AG04449 (cell line): ENCODE measurements at regions of chr13 and their contacts with region 1.

Region 1: DNA sequence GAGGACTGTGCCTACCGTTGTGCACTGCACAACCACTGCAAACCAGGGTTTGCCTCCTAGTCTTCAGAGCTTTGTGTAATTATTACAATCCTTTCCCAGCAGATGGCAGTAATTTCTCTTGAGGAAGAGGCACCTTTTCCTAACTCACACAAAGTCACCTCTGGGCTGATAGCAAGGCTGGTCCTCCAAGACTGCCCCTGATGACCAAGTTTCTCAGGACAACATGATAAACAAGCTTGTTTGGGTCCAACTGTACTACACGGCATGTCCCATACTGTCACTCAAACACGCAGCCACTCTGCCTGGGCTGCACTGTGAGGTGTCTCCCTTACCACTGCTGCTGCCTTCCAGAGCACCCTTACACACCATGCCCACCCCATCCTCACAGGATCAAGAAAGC is 39.3 kb downstream of the RFXAP start:
- DNase-seq: no peak
- H3K4me3 ChIP-seq: no peak overlapping the region
- CTCF ChIP-seq: peak; percentile 38

Region 2: GRCh38 chr13:36829753-36830152 is 28.5 kb before region 1 on chr13:
- CTCF ChIA-PET with region 1: interaction called, 13 read pairs
- POLR2A ChIA-PET with region 1: no interaction called
- DNase-seq: no peak
- H3K4me3 ChIP-seq: no peak overlapping the region
- CTCF ChIP-seq: no peak

Region 3: GRCh38 chr13:36880961-36881360 is 22.7 kb after region 1 on chr13:
- CTCF ChIA-PET with region 1: interaction called, 11 read pairs
- POLR2A ChIA-PET with region 1: no interaction called
- DNase-seq: no peak
- H3K4me3 ChIP-seq: no peak overlapping the region
- CTCF ChIP-seq: no peak

Region 4: DNA sequence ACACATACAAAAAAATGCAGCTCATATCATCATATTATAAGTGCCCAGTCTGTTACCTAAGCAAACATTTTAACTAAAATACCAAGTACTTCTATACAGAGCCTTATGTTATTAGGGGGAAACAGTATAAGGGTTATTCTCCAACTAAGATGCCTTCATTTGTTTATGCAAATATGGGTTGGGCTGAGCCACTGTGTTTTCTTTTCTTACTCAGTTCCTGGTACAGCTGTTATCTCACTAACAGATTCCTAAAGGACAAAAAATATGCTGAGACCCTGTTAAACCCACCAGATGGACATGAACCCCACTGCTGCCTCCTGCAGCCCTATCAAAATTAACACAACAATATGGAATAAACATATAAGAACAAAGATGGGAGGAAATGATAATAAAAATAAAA is 96.3 kb after region 1 on chr13:
- CTCF ChIA-PET with region 1: interaction called, 17 read pairs
- POLR2A ChIA-PET with region 1: no interaction called
- DNase-seq: no peak
- H3K4me3 ChIP-seq: no peak overlapping the region
- CTCF ChIP-seq: no peak

Region 5: GRCh38 chr13:36986462-36987240 is 128.4 kb after region 1 on chr13:
- CTCF ChIA-PET with region 1: interaction called, 332 read pairs
- POLR2A ChIA-PET with region 1: no interaction called
- DNase-seq: no peak
- H3K4me3 ChIP-seq: no peak overlapping the region
- CTCF ChIP-seq: no peak

Region 6: GRCh38 chr13:37416291-37417059 is 558.2 kb after region 1 on chr13:
- CTCF ChIA-PET with region 1: no interaction called
- POLR2A ChIA-PET with region 1: no interaction called
- DNase-seq: no peak
- H3K4me3 ChIP-seq: no peak overlapping the region
- CTCF ChIP-seq: no peak